Mammary epithelial cell (primary cell): ENCODE measurements at regions of chr21 and their contacts with region 1.

Region 1: DNA sequence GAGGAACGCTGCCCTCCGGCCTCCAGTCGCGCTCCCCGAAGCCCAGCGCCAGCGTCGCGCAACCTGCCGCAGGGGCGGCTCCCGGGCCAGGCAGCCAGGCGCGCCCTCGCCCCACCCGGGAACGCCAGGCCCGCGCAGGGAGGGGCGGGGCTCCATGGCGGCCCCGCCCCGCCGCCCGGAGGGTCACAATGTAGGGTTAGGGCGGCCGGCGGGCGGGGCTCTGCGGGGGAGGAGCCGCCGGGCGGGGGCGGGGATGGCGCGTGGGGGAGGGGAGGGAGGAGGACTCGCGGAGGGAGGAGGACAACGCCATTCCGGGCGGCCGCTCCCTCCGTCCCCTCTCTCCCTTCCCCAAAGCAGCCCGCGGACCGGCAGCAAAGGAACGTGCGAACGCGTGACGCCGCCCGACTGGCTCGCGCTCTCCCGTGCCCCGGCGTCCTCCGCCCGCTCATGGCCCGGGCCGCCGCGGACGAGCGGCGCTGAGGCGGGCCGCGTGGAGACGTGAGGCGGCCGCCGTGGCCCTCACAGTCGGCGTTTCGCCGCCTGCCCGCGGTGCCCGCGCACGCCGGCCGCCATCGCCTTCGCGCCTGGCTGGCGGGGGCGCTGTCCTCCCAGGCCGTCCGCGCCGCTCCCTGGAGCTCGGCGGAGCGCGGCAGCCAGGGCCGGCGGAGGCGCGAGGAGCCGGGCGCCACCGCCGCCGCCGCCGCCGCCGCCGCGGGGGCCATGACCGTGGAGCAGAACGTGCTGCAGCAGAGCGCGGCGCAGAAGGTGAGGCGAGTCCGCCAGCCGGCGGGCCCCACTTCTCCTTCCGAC is at the start of gene USP25:
- DNase-seq: peak; percentile 73
- H3K4me3 ChIP-seq: peak within 1 kb of the TSS; percentile 89 to 93 (median 92)
- H3K27ac ChIP-seq: peak within 1 kb of the TSS; percentile 76
- H3K4me1 ChIP-seq: no peaks in the 10 kb centered on the region
- H3K27me3 ChIP-seq: no peaks in the 10 kb centered on the region
- CTCF ChIP-seq: peak; percentile 14 to 25
- total RNA-seq, gene USP25: 43.0 to 54.2 TPM

Region 2: GRCh38 chr21:14877570-14878228 is 852.2 kb before region 1 on chr21:
- CTCF ChIA-PET with region 1: no interaction called
- dilution Hi-C with region 1: no loop called
- in situ Hi-C with region 1: no loop called
- intact Hi-C with region 1: no loop called
- DNase-seq: peak; percentile 69
- H3K4me3 ChIP-seq: no peak overlapping the region
- H3K27ac ChIP-seq: no peak overlapping the region
- H3K4me1 ChIP-seq: peaks cover 22% of the 10 kb centered on the region
- H3K27me3 ChIP-seq: no peaks in the 10 kb centered on the region
- CTCF ChIP-seq: no peak

Region 3: GRCh38 chr21:15221799-15222386 is 508.0 kb before region 1 on chr21:
- CTCF ChIA-PET with region 1: no interaction called
- dilution Hi-C with region 1: no loop called
- in situ Hi-C with region 1: no loop called
- intact Hi-C with region 1: no loop called
- DNase-seq: peak; percentile 96
- H3K4me3 ChIP-seq: no peak overlapping the region
- H3K27ac ChIP-seq: peak overlapping the region; percentile 87
- H3K4me1 ChIP-seq: peaks cover 38% of the 10 kb centered on the region
- H3K27me3 ChIP-seq: no peaks in the 10 kb centered on the region
- CTCF ChIP-seq: peak in 1 of 2 donors; percentile 8

Region 4: GRCh38 chr21:15604424-15604823 is 125.5 kb before region 1 on chr21:
- CTCF ChIA-PET with region 1: no interaction called
- dilution Hi-C with region 1: no loop called
- in situ Hi-C with region 1: no loop called
- intact Hi-C with region 1: loop called (anchors 2 kb)
- DNase-seq: peak; percentile 68
- H3K4me3 ChIP-seq: no peak overlapping the region
- H3K27ac ChIP-seq: no peak overlapping the region
- H3K4me1 ChIP-seq: peaks cover 10% of the 10 kb centered on the region
- H3K27me3 ChIP-seq: no peaks in the 10 kb centered on the region
- CTCF ChIP-seq: no peak

Region 5: GRCh38 chr21:15638856-15639549 is 90.9 kb before region 1 on chr21:
- CTCF ChIA-PET with region 1: no interaction called
- dilution Hi-C with region 1: no loop called
- in situ Hi-C with region 1: no loop called
- intact Hi-C with region 1: loop called (anchors 5 kb)
- DNase-seq: peak; percentile 58
- H3K4me3 ChIP-seq: no peak overlapping the region
- H3K27ac ChIP-seq: no peak overlapping the region
- H3K4me1 ChIP-seq: no peaks in the 10 kb centered on the region
- H3K27me3 ChIP-seq: no peaks in the 10 kb centered on the region
- CTCF ChIP-seq: no peak

Region 6: GRCh38 chr21:15706692-15707091 is 23.2 kb before region 1 on chr21:
- CTCF ChIA-PET with region 1: no interaction called
- dilution Hi-C with region 1: no loop called
- in situ Hi-C with region 1: no loop called
- intact Hi-C with region 1: loop called (anchors 2 kb)
- DNase-seq: peak; percentile 93
- H3K4me3 ChIP-seq: no peak overlapping the region
- H3K27ac ChIP-seq: no peak overlapping the region
- H3K4me1 ChIP-seq: peaks cover 9% of the 10 kb centered on the region
- H3K27me3 ChIP-seq: no peaks in the 10 kb centered on the region
- CTCF ChIP-seq: no peak

Region 7: GRCh38 chr21:15768045-15768601 is 38.2 kb after region 1 on chr21:
- CTCF ChIA-PET with region 1: no interaction called
- dilution Hi-C with region 1: no loop called
- in situ Hi-C with region 1: no loop called
- intact Hi-C with region 1: loop called (anchors 2 kb)
- DNase-seq: no peak
- H3K4me3 ChIP-seq: no peak overlapping the region
- H3K27ac ChIP-seq: no peak overlapping the region
- H3K4me1 ChIP-seq: peaks cover 5% of the 10 kb centered on the region
- H3K27me3 ChIP-seq: no peaks in the 10 kb centered on the region
- CTCF ChIP-seq: no peak

Region 8: GRCh38 chr21:15826147-15826780 is 96.4 kb after region 1 on chr21:
- CTCF ChIA-PET with region 1: no interaction called
- dilution Hi-C with region 1: no loop called
- in situ Hi-C with region 1: no loop called
- intact Hi-C with region 1: loop called (anchors 1 kb)
- DNase-seq: peak; percentile 66
- H3K4me3 ChIP-seq: no peak overlapping the region
- H3K27ac ChIP-seq: no peak overlapping the region
- H3K4me1 ChIP-seq: no peaks in the 10 kb centered on the region
- H3K27me3 ChIP-seq: no peaks in the 10 kb centered on the region
- CTCF ChIP-seq: peak; percentile 71 to 72